Activated CD4-positive, alpha-beta T cell treated with anti-CD3 and anti-CD28 coated beads, Interleukin-2, amount 10 ng/mL, durations not matched to agents 24 days and 14 days (primary cell): ENCODE measurements at regions of chr11 and their contacts with region 1.

Region 1: DNA sequence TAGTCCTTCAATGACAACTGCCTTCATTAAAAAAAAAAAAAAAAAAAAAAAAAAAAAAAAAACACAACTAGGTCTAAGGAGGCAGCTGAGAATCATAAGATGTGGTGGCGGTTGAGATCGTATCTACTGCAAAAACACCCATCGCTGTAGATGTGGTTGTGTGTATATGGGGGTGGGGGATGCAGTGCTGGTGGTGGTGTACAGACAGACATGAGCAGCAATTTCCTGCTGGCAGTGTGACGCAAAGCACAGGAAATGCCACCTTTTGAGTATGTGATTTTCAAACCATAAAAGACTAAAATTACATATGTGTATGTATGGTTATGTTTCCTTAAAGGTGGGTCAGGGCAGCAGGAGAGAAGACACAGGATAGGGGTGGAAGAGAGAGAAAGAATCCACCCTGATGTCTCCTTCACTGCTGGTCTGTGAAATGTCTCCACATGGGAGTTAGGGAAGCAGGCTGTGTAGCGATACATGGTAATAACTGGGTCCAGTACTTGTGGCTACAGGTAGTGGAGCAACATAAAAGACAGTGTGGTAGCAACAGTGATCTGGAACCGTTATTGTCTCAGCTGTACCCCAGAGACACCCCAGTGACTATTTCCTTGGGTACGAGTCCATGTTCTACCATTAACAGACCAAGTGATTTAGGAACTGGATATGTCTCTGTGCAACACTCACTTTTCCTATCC is 57.9 kb downstream of the SYTL2 start:
- DNase-seq: peak; percentile 97
- H3K4me3 Mint-ChIP-seq: peak overlapping the region; percentile 78
- H3K27ac Mint-ChIP-seq: peak overlapping the region; percentile 97
- H3K4me1 Mint-ChIP-seq: peaks cover 88% of the 10 kb centered on the region
- H3K27me3 Mint-ChIP-seq: peaks cover 2% of the 10 kb centered on the region

Region 2: GRCh38 chr11:85664615-85665481 is 88.2 kb before region 1 on chr11 and contains the start of gene CREBZF:
- intact Hi-C with region 1: loop called (anchors 1 kb)
- DNase-seq: peak; percentile 98
- H3K4me3 Mint-ChIP-seq: peak within 1 kb of the TSS; percentile 97
- H3K27ac Mint-ChIP-seq: peak within 1 kb of the TSS; percentile 99
- H3K4me1 Mint-ChIP-seq: peaks cover 29% of the 10 kb centered on the region
- H3K27me3 Mint-ChIP-seq: peaks cover 2% of the 10 kb centered on the region
- total RNA-seq, gene CREBZF: 50.9 and 54.5 TPM in 2 replicates

Region 3: DNA sequence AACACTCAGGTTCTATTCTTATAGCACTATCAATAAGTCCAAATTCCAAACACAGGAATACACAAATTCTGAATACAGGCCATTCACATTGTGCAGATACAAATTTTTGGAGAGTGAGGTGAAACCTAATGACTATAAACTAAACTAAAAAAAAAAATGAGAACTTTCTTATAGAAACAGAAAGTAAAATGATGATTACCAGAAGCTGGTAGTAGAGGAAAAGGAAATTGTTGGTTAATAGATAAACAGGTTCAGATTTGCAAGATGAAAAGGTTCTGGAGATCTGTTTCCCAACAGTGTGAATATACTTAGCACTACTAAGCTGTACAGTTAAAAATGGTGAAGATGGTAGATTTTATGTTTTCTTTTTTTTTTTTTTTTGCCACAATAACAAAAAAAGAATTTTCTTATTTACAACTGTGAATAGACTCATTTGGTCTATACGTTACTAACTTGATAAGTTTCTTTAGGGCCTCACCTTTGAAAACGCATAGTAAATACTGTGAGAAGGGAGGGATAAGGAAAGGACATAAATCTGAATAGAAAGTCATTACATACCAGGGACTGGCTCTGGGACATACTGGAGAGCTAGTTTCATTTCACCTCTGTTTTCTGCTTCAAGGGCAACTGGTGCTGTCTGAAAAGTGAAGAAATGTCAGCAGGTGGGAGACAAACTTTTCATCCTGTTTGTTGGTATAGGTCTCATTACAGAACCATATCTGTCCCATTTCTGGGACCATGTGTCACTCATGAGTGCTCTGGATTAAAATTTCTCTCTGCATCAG is 52.9 kb before region 1 on chr11:
- intact Hi-C with region 1: loop called (anchors 2 kb)
- DNase-seq: peak; percentile 58
- H3K4me3 Mint-ChIP-seq: peak overlapping the region; percentile 36
- H3K27ac Mint-ChIP-seq: peak overlapping the region; percentile 80
- H3K4me1 Mint-ChIP-seq: peaks cover 32% of the 10 kb centered on the region
- H3K27me3 Mint-ChIP-seq: no peaks in the 10 kb centered on the region

Region 4: DNA sequence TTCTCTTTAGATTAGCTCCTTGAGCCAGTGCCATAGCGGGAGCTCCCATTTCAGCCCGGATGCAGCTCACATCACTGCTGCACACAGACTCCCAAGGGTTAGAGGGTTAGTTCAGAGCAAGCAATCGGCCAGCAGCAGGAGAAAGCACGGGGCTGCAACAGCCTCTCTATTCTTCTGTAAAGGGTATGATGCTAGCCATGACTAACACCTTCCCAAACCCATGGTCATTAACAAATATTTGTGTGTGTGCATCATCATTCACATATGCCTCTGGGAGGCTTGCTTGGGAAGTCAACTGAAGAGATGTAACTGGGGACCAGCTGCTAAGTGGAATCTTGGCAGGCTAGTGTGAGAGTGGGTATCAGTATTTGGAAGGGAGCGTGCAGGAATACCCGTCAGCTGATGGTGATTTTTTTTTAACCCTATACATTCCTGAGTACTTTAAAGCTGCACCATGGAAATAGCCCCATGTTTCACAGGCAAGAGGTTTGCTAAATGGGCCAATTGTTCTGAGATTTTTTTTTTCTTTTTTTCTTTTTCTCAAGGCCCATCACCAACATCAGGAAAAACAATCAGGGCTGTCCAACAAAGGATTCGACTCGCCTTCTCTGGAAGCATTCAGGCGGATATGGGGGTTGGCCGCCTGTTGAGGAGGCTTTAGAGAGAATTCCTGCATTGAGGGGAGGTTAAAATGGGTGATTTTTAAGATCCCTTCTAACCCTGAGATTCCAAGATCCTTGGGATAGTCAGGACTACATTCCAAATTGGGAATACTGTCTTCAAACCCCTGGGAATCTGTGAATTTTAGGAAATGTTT is 33.8 kb before region 1 on chr11:
- intact Hi-C with region 1: no loop called
- DNase-seq: no peak
- H3K4me3 Mint-ChIP-seq: no peak overlapping the region
- H3K27ac Mint-ChIP-seq: no peak overlapping the region
- H3K4me1 Mint-ChIP-seq: peaks cover 5% of the 10 kb centered on the region
- H3K27me3 Mint-ChIP-seq: no peaks in the 10 kb centered on the region

Region 5: GRCh38 chr11:85766721-85767161 is 13.7 kb after region 1 on chr11:
- intact Hi-C with region 1: loop called (anchors 1 kb)
- DNase-seq: no peak
- H3K4me3 Mint-ChIP-seq: no peak overlapping the region
- H3K27ac Mint-ChIP-seq: no peak overlapping the region
- H3K4me1 Mint-ChIP-seq: peaks cover 55% of the 10 kb centered on the region
- H3K27me3 Mint-ChIP-seq: no peaks in the 10 kb centered on the region

Region 6: DNA sequence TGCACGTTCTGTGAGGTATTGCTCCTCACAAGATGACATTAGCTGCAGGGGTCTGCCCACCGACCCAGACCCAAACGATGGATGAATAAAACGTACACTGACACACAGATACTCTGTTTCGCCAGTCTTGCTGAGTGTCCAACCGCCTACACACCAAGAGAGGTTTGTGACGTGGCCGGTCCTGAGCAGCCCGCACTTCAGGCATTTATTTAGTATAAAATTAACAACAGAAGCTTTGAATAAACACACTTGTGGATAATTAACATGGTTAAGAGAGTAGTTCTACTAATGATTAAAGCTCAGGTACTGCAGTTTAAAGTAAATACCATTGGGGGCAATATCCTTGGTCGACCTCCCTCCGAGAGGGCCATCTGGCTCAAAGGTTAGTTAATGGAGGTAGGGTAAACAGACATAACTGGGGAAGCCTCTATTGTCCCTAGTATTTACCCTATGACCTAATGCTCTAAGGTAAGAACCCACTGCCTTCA is 177.9 kb after region 1 on chr11:
- intact Hi-C with region 1: no loop called
- DNase-seq: no peak
- H3K4me3 Mint-ChIP-seq: no peak overlapping the region
- H3K27ac Mint-ChIP-seq: no peak overlapping the region
- H3K4me1 Mint-ChIP-seq: no peaks in the 10 kb centered on the region
- H3K27me3 Mint-ChIP-seq: peaks cover 26% of the 10 kb centered on the region

Region 7: GRCh38 chr11:86499721-86500141 is 746.7 kb after region 1 on chr11:
- intact Hi-C with region 1: loop called (anchors 5 kb)
- DNase-seq: no peak
- H3K4me3 Mint-ChIP-seq: no peak overlapping the region
- H3K27ac Mint-ChIP-seq: no peak overlapping the region
- H3K4me1 Mint-ChIP-seq: peaks cover 6% of the 10 kb centered on the region
- H3K27me3 Mint-ChIP-seq: peaks cover 5% of the 10 kb centered on the region